ENCODE measurements at regions of chr7 and their contacts with region 1.

Region 1: DNA sequence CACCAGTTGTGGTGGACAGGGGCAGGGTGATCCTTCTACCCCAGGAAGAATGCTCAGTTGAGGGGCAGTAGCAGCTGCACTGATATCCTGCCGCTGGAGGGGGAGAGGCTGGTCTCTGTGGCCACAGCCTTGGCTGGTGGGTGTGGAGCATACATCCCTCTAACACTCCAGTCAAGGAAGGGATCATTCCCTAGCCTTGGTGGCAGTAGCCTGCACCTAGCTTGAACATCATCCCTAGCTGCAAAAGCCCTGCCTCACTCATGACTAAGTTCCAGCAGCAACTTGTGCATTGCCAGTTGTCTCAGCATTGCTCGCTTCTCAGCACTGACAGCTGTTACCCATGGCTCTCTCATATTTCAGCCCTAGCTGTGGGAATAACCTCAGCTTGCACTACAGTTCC is 688.9 kb upstream of the POT1 start:
- DNase-seq: no peak
- H3K4me3 ChIP-seq: no peak overlapping the region
- H3K27ac ChIP-seq: no peak overlapping the region
- H3K4me1 ChIP-seq: no peaks in the 10 kb centered on the region
- H3K27me3 ChIP-seq: no peaks in the 10 kb centered on the region
- CTCF ChIP-seq: no peak
- EP300 ChIP-seq: no peak
- POLR2A ChIP-seq: no peak

Region 2: GRCh38 chr7:125555916-125556315 is 62.6 kb before region 1 on chr7:
- intact Hi-C with region 1: loop called in 1 of 4 experiments (anchors 10 kb)
- DNase-seq: no peak
- H3K4me3 ChIP-seq: no peak overlapping the region
- H3K27ac ChIP-seq: no peak overlapping the region
- H3K4me1 ChIP-seq: no peaks in the 10 kb centered on the region
- H3K27me3 ChIP-seq: no peaks in the 10 kb centered on the region
- CTCF ChIP-seq: no peak
- EP300 ChIP-seq: no peak
- POLR2A ChIP-seq: no peak